CD4-positive, alpha-beta memory T cell (primary cell): ENCODE measurements at regions of chr6 and their contacts with region 1.

Region 1: DNA sequence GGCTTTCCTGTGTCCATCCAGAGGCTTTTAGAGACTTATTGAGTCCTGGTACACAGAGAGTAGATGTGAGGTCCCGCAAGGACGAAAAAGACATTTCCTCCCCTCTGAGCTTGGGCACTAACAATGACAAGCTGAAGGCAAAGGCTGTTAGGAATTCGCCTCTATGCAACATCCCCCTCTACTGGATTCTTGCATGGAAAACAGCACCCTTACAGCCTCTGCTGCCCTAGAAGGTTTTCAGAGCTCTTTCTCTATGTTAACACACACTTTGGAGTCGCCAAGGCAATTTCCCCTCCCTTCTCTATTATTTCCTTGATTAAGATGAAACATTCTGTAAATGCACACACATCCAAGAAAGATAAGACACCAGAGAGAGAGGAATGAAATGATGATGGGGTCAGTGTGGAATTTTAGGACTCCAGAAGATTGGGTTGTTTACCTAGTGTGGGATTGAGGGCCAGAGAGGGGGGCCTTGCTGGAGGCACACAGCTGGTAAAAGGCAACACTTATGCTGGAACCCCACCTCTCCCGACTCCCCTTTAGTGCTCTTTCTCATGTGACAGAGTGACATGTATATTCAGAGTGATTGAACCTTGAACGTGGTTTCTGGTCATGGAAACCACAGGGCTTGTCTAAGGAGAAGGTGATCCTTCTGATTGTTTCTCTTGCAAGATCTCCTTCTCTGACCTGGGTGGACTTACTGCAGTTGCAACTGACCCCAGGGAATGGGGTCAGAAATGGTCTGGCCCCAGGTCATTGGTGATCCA is 300.7 kb downstream of the CLIC5 start:
- DNase-seq: peak; percentile 62 to 74 (median 68)
- H3K4me3 ChIP-seq: no peak overlapping the region
- H3K4me3 Mint-ChIP-seq: peak overlapping the region; percentile 62 to 78 (median 66)
- H3K27ac ChIP-seq: no peak overlapping the region
- H3K27ac Mint-ChIP-seq: peak overlapping the region in 3 of 7 donors; percentile 3 to 70 (median 58)
- H3K4me1 ChIP-seq: peaks cover 21% of the 10 kb centered on the region
- H3K4me1 Mint-ChIP-seq: peaks cover 19 to 29% (median 23%) of the 10 kb centered on the region in 4 donors
- H3K27me3 ChIP-seq: no peaks in the 10 kb centered on the region
- H3K27me3 Mint-ChIP-seq: peaks cover 0 to 2% of the 10 kb centered on the region in 2 donors

Region 2: DNA sequence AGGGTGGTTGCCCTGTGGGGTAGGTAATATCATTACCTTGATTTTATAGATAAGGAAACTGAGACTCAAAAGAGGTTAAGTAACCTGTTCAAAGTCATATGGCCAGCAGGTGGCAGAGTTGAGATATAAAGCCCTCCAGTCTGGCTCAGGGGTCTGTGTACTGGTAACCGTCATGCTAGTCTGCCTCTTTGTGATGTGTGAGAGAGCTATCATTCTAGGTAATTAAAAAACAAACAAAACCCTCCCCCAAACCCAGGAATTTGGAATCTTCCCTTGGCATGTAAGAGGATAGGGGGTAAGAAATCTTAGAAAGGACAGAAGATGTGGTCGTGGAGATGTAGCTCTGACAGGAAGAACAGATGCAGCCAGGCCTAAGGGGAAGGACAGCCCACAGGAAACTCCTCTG is 1121.4 kb before region 1 on chr6:
- CTCF ChIA-PET with region 1: interaction called, 10 read pairs
- POLR2A ChIA-PET with region 1: no interaction called
- intact Hi-C with region 1: no loop called
- DNase-seq: peak; percentile 24 to 46 (median 36)
- H3K4me3 ChIP-seq: no peak overlapping the region
- H3K4me3 Mint-ChIP-seq: no peak overlapping the region
- H3K27ac ChIP-seq: no peak overlapping the region
- H3K27ac Mint-ChIP-seq: no peak overlapping the region
- H3K4me1 ChIP-seq: no peaks in the 10 kb centered on the region
- H3K4me1 Mint-ChIP-seq: peaks cover 0 to 3% (median 1%) of the 10 kb centered on the region in 4 donors
- H3K27me3 ChIP-seq: no peaks in the 10 kb centered on the region
- H3K27me3 Mint-ChIP-seq: peaks cover 6 to 11% of the 10 kb centered on the region in 2 donors

Region 3: GRCh38 chr6:44667668-44668390 is 1047.1 kb before region 1 on chr6:
- CTCF ChIA-PET with region 1: interaction called, 10 read pairs
- POLR2A ChIA-PET with region 1: no interaction called
- intact Hi-C with region 1: no loop called
- DNase-seq: peak in 4 of 5 donors; percentile 9 to 12 (median 11)
- H3K4me3 ChIP-seq: no peak overlapping the region
- H3K4me3 Mint-ChIP-seq: no peak overlapping the region
- H3K27ac ChIP-seq: no peak overlapping the region
- H3K27ac Mint-ChIP-seq: peak overlapping the region in 1 of 7 donors; percentile 30
- H3K4me1 ChIP-seq: no peaks in the 10 kb centered on the region
- H3K4me1 Mint-ChIP-seq: no peaks in the 10 kb centered on the region
- H3K27me3 ChIP-seq: no peaks in the 10 kb centered on the region
- H3K27me3 Mint-ChIP-seq: peaks cover 0 to 1% of the 10 kb centered on the region in 2 donors

Region 4: GRCh38 chr6:45377554-45378333 is 337.2 kb before region 1 on chr6 and contains the start of gene SUPT3H:
- CTCF ChIA-PET with region 1: interaction called, 29 read pairs
- POLR2A ChIA-PET with region 1: interaction called, 21 read pairs
- intact Hi-C with region 1: loop called (anchors 1 kb)
- DNase-seq: peak; percentile 88 to 96 (median 90)
- H3K4me3 ChIP-seq: peak within 1 kb of the TSS; percentile 72 to 96
- H3K4me3 Mint-ChIP-seq: peak within 1 kb of the TSS; percentile 93 to 99 (median 96)
- H3K27ac ChIP-seq: peak within 1 kb of the TSS; percentile 96
- H3K27ac Mint-ChIP-seq: peak within 1 kb of the TSS; percentile 95 to 99 (median 98)
- H3K4me1 ChIP-seq: peaks cover 17% of the 10 kb centered on the region
- H3K4me1 Mint-ChIP-seq: peaks cover 8 to 30% (median 19%) of the 10 kb centered on the region in 4 donors
- H3K27me3 ChIP-seq: no peaks in the 10 kb centered on the region
- H3K27me3 Mint-ChIP-seq: no peaks in the 10 kb centered on the region
- total RNA-seq, gene SUPT3H: 11.8 to 12.6 TPM

Region 5: GRCh38 chr6:45586216-45587171 is 128.4 kb before region 1 on chr6:
- CTCF ChIA-PET with region 1: interaction called, 11 read pairs
- POLR2A ChIA-PET with region 1: interaction called, 15 read pairs
- intact Hi-C with region 1: loop called (anchors 1 kb)
- DNase-seq: peak; percentile 89 to 93 (median 91)
- H3K4me3 ChIP-seq: peak overlapping the region in 1 of 2 donors; percentile 25
- H3K4me3 Mint-ChIP-seq: peak overlapping the region; percentile 70 to 94 (median 86)
- H3K27ac ChIP-seq: peak overlapping the region; percentile 17
- H3K27ac Mint-ChIP-seq: peak overlapping the region; percentile 92 to 98 (median 95)
- H3K4me1 ChIP-seq: peaks cover 66% of the 10 kb centered on the region
- H3K4me1 Mint-ChIP-seq: peaks cover 66 to 78% (median 73%) of the 10 kb centered on the region in 4 donors
- H3K27me3 ChIP-seq: no peaks in the 10 kb centered on the region
- H3K27me3 Mint-ChIP-seq: no peaks in the 10 kb centered on the region